Common myeloid progenitor, CD34-positive (primary cell): ENCODE measurements at regions of chr17 and their contacts with region 1.

Region 1: GRCh38 chr17:1331708-1332107 is 52.2 kb downstream of the TRARG1 start:
- DNase-seq: peak; percentile 47 to 95 (median 87)
- H3K4me3 ChIP-seq: no peak overlapping the region
- H3K27ac ChIP-seq: no peak overlapping the region
- H3K4me1 ChIP-seq: peaks cover 0 to 8% (median under 1%) of the 10 kb centered on the region in 4 experiments
- H3K27me3 ChIP-seq: peaks cover 0 to 6% (median 2%) of the 10 kb centered on the region in 5 experiments

Region 2: DNA sequence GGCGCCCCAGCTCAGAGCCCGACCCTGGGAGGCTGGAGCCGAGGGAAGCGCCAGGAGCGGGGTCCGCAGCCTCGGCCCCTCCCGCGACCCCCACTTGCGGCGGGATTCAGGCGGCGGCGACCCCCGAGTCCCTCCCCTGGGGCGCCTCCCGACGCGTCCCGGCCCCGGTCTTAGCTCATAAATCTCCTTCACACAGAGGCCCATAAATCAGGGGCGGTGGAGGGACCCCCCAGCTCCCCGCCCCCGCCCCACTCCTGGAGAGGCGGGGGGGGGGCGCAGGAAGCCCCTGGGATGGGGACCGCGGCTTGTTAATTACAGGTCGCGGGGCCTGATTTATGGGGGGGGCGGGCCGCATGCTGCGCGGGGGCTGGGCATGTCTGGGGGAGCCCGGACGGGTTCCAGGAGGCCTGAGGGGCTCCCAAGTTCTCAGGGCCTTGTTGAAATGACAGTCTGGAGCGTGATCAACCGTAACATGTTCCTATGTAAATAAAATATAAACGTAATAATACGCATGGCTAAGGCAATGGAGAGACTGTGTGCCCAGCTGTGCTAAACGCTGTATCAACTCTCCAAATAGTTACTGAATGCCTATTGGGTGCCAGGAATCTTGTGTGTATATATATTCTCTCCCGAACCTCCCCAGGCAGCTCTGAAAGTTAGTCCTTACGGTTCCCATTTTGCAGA is 71.5 kb before region 1 on chr17:
- CTCF ChIA-PET with region 1: interaction called, 36 read pairs
- POLR2A ChIA-PET with region 1: no interaction called
- DNase-seq: no peak
- H3K4me3 ChIP-seq: peak overlapping the region in 4 of 7 experiments; percentile 52 to 64 (median 56)
- H3K27ac ChIP-seq: no peak overlapping the region
- H3K4me1 ChIP-seq: peaks cover 0 to 28% (median 24%) of the 10 kb centered on the region in 4 experiments
- H3K27me3 ChIP-seq: peaks cover 2 to 21% (median 14%) of the 10 kb centered on the region in 5 experiments

Region 3: GRCh38 chr17:1275962-1276736 is 55.6 kb before region 1 on chr17:
- CTCF ChIA-PET with region 1: interaction called, 13 read pairs
- POLR2A ChIA-PET with region 1: no interaction called
- DNase-seq: peak; percentile 61 to 77 (median 75)
- H3K4me3 ChIP-seq: peak overlapping the region in 2 of 7 experiments; percentile 11 to 16
- H3K27ac ChIP-seq: no peak overlapping the region
- H3K4me1 ChIP-seq: no peaks in the 10 kb centered on the region
- H3K27me3 ChIP-seq: peaks cover 0 to 30% (median 22%) of the 10 kb centered on the region in 5 experiments